ENCODE measurements at regions of chr1 and their contacts with region 1.

Region 1: DNA sequence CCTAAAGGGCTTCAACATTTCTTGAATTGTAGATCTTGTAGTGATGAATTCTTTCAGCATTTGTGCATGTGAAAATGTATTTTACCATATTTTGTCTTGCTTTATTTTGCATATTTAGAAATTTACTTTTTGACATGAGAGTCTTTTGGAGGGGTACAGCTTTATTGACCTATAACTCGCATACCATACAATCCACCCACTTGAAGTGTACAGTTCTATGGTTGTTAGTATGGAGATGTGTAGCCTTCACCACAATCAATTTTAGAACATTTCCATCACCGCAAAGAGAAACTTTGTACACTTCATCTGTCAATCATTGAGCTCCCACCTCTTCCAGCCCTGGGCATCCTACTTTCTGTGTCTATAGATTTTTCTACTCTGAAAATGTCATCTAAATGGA is 7.2 kb upstream of the MIA3 start:
- DNase-seq: no peak
- ATAC-seq: no peak
- H3K4me3 ChIP-seq: no peak overlapping the region
- H3K4me3 Mint-ChIP-seq: no peak overlapping the region
- H3K27ac ChIP-seq: no peak overlapping the region
- H3K27ac Mint-ChIP-seq: no peak overlapping the region
- H3K4me1 ChIP-seq: no peaks in the 10 kb centered on the region
- H3K4me1 Mint-ChIP-seq: no peaks in the 10 kb centered on the region
- H3K27me3 ChIP-seq: no peaks in the 10 kb centered on the region
- H3K27me3 Mint-ChIP-seq: peaks cover 5 to 58% (median 29%) of the 10 kb centered on the region in 5 donors

Region 2: GRCh38 chr1:222596696-222597095 is 14.0 kb before region 1 on chr1:
- CTCF ChIA-PET with region 1: no interaction called
- POLR2A ChIA-PET with region 1: interaction called, 3 read pairs
- intact Hi-C with region 1: loop called in 1 of 2 experiments (anchors 2 kb)
- DNase-seq: no peak
- ATAC-seq: no peak
- H3K4me3 ChIP-seq: no peak overlapping the region
- H3K4me3 Mint-ChIP-seq: no peak overlapping the region
- H3K27ac ChIP-seq: no peak overlapping the region
- H3K27ac Mint-ChIP-seq: no peak overlapping the region
- H3K4me1 ChIP-seq: no peaks in the 10 kb centered on the region
- H3K4me1 Mint-ChIP-seq: peaks cover 0 to 9% (median 4%) of the 10 kb centered on the region in 7 donors
- H3K27me3 ChIP-seq: no peaks in the 10 kb centered on the region
- H3K27me3 Mint-ChIP-seq: peaks cover 0 to 10% (median 0%) of the 10 kb centered on the region in 5 donors

Region 3: DNA sequence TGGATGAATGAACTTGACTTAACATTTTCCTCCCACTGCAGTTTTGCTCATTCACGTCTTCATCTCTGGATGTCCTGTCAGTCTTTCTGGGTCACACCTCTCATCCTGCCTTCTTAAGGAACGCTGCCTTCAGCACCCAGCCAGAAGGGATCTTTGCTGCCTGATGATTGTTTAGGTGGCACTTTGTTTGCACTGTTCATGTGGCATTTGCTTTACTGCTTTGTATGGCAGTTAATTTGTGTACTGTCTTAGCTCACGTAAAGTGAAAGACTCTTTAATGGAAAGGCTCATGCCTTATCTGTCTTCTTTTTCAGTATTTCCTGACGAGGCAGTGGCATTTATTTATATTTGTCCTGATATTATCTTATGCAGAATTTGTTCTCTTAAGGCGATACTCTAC is 12.0 kb after region 1 on chr1:
- CTCF ChIA-PET with region 1: no interaction called
- POLR2A ChIA-PET with region 1: no interaction called
- intact Hi-C with region 1: no loop called
- DNase-seq: no peak
- ATAC-seq: no peak
- H3K4me3 ChIP-seq: no peak overlapping the region
- H3K4me3 Mint-ChIP-seq: no peak overlapping the region
- H3K27ac ChIP-seq: no peak overlapping the region
- H3K27ac Mint-ChIP-seq: peak overlapping the region in 1 of 9 donors; percentile 42
- H3K4me1 ChIP-seq: peaks cover 11 to 16% of the 10 kb centered on the region in 2 donors
- H3K4me1 Mint-ChIP-seq: peaks cover 13 to 32% (median 28%) of the 10 kb centered on the region in 7 donors
- H3K27me3 ChIP-seq: no peaks in the 10 kb centered on the region
- H3K27me3 Mint-ChIP-seq: peaks cover 0 to 6% (median 0%) of the 10 kb centered on the region in 5 donors

Region 4: GRCh38 chr1:222641269-222641948 is 30.7 kb after region 1 on chr1:
- CTCF ChIA-PET with region 1: no interaction called
- POLR2A ChIA-PET with region 1: no interaction called
- intact Hi-C with region 1: no loop called
- DNase-seq: no peak
- ATAC-seq: no peak
- H3K4me3 ChIP-seq: no peak overlapping the region
- H3K4me3 Mint-ChIP-seq: no peak overlapping the region
- H3K27ac ChIP-seq: no peak overlapping the region
- H3K27ac Mint-ChIP-seq: peak overlapping the region in 3 of 9 donors; percentile 36 to 81 (median 50)
- H3K4me1 ChIP-seq: peaks cover 12% of the 10 kb centered on the region in 2 donors
- H3K4me1 Mint-ChIP-seq: peaks cover 6 to 39% (median 29%) of the 10 kb centered on the region in 7 donors
- H3K27me3 ChIP-seq: no peaks in the 10 kb centered on the region
- H3K27me3 Mint-ChIP-seq: no peaks in the 10 kb centered on the region

Region 5: GRCh38 chr1:222670110-222670509 is 59.4 kb after region 1 on chr1:
- CTCF ChIA-PET with region 1: no interaction called
- POLR2A ChIA-PET with region 1: no interaction called
- intact Hi-C with region 1: no loop called
- DNase-seq: peak in 4 of 9 donors; percentile 22 to 48 (median 32)
- ATAC-seq: peak; percentile 31
- H3K4me3 ChIP-seq: no peak overlapping the region
- H3K4me3 Mint-ChIP-seq: peak overlapping the region in 7 of 10 donors; percentile 6 to 68 (median 49)
- H3K27ac ChIP-seq: peak overlapping the region; percentile 28
- H3K27ac Mint-ChIP-seq: peak overlapping the region; percentile 65 to 91 (median 89)
- H3K4me1 ChIP-seq: peaks cover 0 to 10% of the 10 kb centered on the region in 2 donors
- H3K4me1 Mint-ChIP-seq: peaks cover 15 to 32% (median 26%) of the 10 kb centered on the region in 7 donors
- H3K27me3 ChIP-seq: no peaks in the 10 kb centered on the region
- H3K27me3 Mint-ChIP-seq: no peaks in the 10 kb centered on the region

Measured in naive thymus-derived CD4-positive, alpha-beta T cell (primary cell).